Cardiac septum (tissue), 1 donor: ENCODE measurements at regions of chr20 and their contacts with region 1.

Region 1: GRCh38 chr20:17806739-17807441 is 107.1 kb downstream of the BANF2 start:
- DNase-seq: peak; percentile 83

Region 2: GRCh38 chr20:17761604-17762003 is 45.3 kb before region 1 on chr20:
- intact Hi-C with region 1: no loop called
- DNase-seq: no peak

Region 3: GRCh38 chr20:17843246-17844132 is 36.6 kb after region 1 on chr20:
- intact Hi-C with region 1: loop called (anchors 5 kb)
- DNase-seq: peak; percentile 76